ENCODE measurements at regions of chr22 and their contacts with region 1.

Region 1: DNA sequence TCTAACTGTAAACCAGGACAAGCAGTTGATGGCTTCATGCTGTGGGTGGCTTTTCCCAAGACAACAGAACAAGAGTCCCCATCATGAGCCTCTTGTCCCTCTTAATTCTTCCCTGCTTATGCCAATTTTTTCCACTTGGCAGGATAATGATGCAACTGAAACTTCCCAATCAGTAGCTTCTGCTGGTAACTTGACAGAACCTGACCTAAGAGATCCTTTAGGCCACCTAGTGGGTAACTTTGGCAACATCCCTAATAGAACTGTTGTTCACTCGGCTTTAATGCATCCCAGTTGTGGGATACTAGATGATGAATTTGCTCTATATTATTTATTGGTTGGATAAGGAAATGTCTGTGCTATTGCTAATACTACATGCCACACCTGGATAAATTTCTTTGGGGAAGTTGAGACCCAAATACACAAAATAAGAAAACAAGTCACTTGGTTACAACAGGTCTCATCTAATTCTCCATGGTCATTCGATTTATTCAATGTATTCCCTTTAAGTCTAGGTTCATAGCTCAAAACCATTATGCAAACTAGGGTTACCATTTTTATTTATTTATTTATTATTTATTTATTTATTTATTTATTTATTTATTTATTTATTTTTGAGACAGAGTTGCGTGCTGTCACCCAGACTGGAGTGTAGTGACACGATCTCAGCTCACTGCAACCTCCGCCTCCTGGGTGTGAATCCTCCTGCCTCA is 41.4 kb upstream of the NFAM1 start:
- H3K4me3 ChIP-seq: no peak overlapping the region
- H3K27ac ChIP-seq: no peak overlapping the region
- H3K4me1 ChIP-seq: no peaks in the 10 kb centered on the region
- CTCF ChIP-seq: peak; percentile 38; the same call in 1 of the 2 replicates

Region 2: GRCh38 chr22:42425337-42425988 is 48.2 kb before region 1 on chr22:
- CTCF ChIA-PET with region 1: no interaction called
- POLR2A ChIA-PET with region 1: no interaction called
- H3K4me3 ChIP-seq: no peak overlapping the region
- H3K27ac ChIP-seq: no peak overlapping the region
- H3K4me1 ChIP-seq: no peaks in the 10 kb centered on the region
- CTCF ChIP-seq: no peak

Region 3: DNA sequence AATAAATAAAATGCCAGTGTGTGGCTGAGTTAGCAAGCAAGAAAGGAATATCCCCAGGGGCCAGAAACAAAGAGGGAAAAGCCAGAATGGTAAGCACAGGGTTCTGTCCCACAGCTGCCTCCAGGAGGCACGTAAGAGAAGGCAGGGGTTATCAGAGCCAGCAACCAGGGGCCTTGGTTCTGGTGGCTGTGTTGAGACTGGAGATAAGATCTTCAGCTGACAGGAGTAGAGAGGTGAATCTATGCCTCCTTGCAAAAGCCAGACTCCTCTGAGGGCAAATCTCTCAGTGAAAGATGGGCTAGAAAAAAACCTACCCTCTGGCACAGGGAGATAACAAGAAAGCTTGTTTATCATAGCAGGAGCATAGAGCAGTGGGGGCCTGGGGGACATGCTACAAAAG is 11.6 kb before region 1 on chr22:
- CTCF ChIA-PET with region 1: interaction called, 21 read pairs
- POLR2A ChIA-PET with region 1: no interaction called
- H3K4me3 ChIP-seq: no peak overlapping the region
- H3K27ac ChIP-seq: no peak overlapping the region
- H3K4me1 ChIP-seq: peaks cover 18% of the 10 kb centered on the region
- CTCF ChIP-seq: no peak

Region 4: GRCh38 chr22:42520663-42521546 is 47.3 kb after region 1 on chr22:
- CTCF ChIA-PET with region 1: no interaction called
- POLR2A ChIA-PET with region 1: no interaction called
- H3K4me3 ChIP-seq: no peak overlapping the region
- H3K27ac ChIP-seq: no peak overlapping the region
- H3K4me1 ChIP-seq: peaks cover 3% of the 10 kb centered on the region; the same call in 1 of the 2 replicates
- CTCF ChIP-seq: no peak

Measured in HEK293 (cell line).